IMR-90 (cell line): ENCODE measurements at regions of chr3 and their contacts with region 1.

Region 1: GRCh38 chr3:48776854-48777253 is 59.8 kb upstream of the IP6K2 start:
- DNase-seq: no peak
- ATAC-seq: no peak
- H3K4me3 ChIP-seq: no peak overlapping the region
- H3K27ac ChIP-seq: no peak overlapping the region
- H3K4me1 ChIP-seq: no peaks in the 10 kb centered on the region
- H3K27me3 ChIP-seq: no peaks in the 10 kb centered on the region
- CTCF ChIP-seq: no peak
- POLR2A ChIP-seq: no peak
- RAD21 ChIP-seq: no peak

Region 2: DNA sequence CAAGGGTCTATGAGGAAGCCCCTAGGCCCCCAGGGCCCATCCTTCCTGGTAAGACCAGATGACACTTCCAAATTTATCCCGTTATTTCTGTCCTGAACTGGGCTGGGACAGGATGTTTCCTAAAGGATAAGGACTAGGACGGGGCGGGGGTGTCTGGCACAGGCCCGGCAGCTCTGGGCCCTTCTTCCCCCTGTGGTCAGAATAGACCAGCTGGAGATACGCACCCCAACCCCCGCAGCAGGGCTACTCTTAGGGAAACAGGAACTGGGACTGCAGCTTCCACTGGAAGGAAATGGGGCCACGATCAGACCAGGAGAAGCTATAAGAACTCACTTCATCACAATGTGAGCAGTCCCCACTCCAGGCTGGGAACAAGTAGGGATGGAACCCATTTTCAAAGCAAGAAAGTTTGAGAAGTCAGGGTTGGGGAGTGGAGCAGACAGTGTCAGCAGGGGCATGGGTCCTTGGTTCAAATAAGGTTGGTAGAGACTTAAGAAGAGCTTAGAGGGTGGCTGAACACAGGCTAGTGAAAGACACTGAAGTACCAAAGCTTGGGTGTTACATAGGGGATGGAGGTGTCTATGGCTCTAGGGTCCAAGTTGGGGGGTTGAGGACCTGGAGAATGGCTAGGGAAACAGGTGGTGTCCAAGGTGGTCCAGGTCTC is 92.2 kb before region 1 on chr3:
- CTCF ChIA-PET with region 1: no interaction called
- POLR2A ChIA-PET with region 1: no interaction called
- dilution Hi-C with region 1: no loop called
- in situ Hi-C with region 1: no loop called
- intact Hi-C with region 1: no loop called
- DNase-seq: peak; percentile 38
- ATAC-seq: 0 out of 2 replicates have a peak, but pooled peaks have one; percentile 1
- H3K4me3 ChIP-seq: peak overlapping the region; percentile 99
- H3K27ac ChIP-seq: peak overlapping the region; percentile 65
- H3K4me1 ChIP-seq: peaks cover 47% of the 10 kb centered on the region
- H3K27me3 ChIP-seq: no peaks in the 10 kb centered on the region
- CTCF ChIP-seq: no peak
- POLR2A ChIP-seq: no peak
- RAD21 ChIP-seq: no peak

Region 3: DNA sequence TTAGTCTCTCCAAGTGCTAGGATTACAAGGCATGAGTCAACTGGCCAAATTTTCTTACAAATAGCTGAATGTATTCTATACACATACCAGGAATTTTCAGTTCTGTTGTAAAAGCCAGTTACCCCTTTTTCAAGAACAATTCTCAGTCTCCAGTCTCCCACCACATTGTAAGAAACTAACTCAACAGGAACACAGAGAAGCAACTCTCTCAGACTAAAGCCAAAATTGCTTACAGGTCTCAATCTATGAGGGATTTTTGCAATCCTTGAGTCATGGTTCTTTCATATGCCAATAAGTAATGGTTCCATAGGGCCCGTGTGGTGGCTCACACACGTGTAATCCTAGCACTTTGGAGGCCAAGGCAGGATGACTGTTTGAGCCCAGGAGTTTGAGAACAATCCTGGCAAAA is 68.4 kb before region 1 on chr3:
- CTCF ChIA-PET with region 1: interaction called, 4 read pairs
- POLR2A ChIA-PET with region 1: interaction called, 11 read pairs
- dilution Hi-C with region 1: no loop called
- in situ Hi-C with region 1: no loop called
- intact Hi-C with region 1: no loop called
- DNase-seq: peak; percentile 75
- ATAC-seq: peak; percentile 72
- H3K4me3 ChIP-seq: no peak overlapping the region
- H3K27ac ChIP-seq: peak overlapping the region; percentile 72; the same call in 1 of the 2 replicates
- H3K4me1 ChIP-seq: peaks cover 13% of the 10 kb centered on the region
- H3K27me3 ChIP-seq: no peaks in the 10 kb centered on the region
- CTCF ChIP-seq: no peak
- POLR2A ChIP-seq: no peak
- RAD21 ChIP-seq: no peak

Region 4: GRCh38 chr3:49104483-49105291 is 327.8 kb after region 1 on chr3 and contains the start of gene QARS1:
- CTCF ChIA-PET with region 1: no interaction called
- POLR2A ChIA-PET with region 1: no interaction called
- dilution Hi-C with region 1: no loop called
- in situ Hi-C with region 1: no loop called
- intact Hi-C with region 1: no loop called
- DNase-seq: peak; percentile 88
- ATAC-seq: peak; percentile 99
- H3K4me3 ChIP-seq: peak within 1 kb of the TSS; percentile 91
- H3K27ac ChIP-seq: peak within 1 kb of the TSS; percentile 93
- H3K4me1 ChIP-seq: peaks cover 9% of the 10 kb centered on the region
- H3K27me3 ChIP-seq: no peaks in the 10 kb centered on the region
- CTCF ChIP-seq: no peak
- POLR2A ChIP-seq: peak; percentile 87
- RAD21 ChIP-seq: no peak
- total RNA-seq, gene QARS1: 396 and 404 TPM in 2 replicates